Activated B cell treated with CpG ODN at 0.5 μM for 24 hours (primary cell): ENCODE measurements at regions of chr2 and their contacts with region 1.

Region 1: DNA sequence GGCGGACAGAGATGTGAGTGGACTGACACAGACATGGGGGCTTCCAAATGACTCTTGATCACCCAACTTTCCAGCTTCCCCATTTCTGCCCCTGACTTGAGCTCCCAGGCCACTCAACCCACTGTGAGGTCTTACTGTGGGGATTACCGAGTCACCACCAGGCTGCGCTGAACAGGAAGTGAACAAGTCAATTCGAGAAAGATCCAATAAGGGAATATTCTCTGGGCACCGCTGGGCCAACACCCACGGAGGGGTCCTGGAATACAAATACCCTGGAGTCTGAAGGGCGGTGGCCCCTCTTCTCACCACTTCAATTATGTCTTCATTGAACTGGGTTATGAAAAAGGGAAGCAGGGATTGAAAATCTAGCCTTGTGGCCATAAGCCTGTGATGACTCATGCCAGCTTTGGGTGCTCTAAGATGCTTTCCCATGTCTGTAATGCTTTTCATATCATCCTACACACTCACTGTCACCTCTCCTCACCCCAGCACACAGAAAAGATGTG is 37.7 kb downstream of the BCL11A start:
- DNase-seq: peak; percentile 57
- ATAC-seq: peak; percentile 76
- H3K4me3 Mint-ChIP-seq: peak overlapping the region; percentile 68
- H3K27ac Mint-ChIP-seq: peak overlapping the region; percentile 91
- H3K4me1 Mint-ChIP-seq: peaks cover 97% of the 10 kb centered on the region
- H3K27me3 Mint-ChIP-seq: no peaks in the 10 kb centered on the region
- CTCF ChIP-seq: no peak

Region 2: GRCh38 chr2:60498816-60499429 is 16.9 kb before region 1 on chr2:
- CTCF ChIA-PET with region 1: interaction called, 4 read pairs
- POLR2A ChIA-PET with region 1: interaction called, 22 read pairs
- intact Hi-C with region 1: loop called (anchors 2 kb)
- DNase-seq: peak; percentile 40
- ATAC-seq: peak; percentile 64
- H3K4me3 Mint-ChIP-seq: peak overlapping the region; percentile 64
- H3K27ac Mint-ChIP-seq: peak overlapping the region; percentile 84
- H3K4me1 Mint-ChIP-seq: peaks cover 99% of the 10 kb centered on the region
- H3K27me3 Mint-ChIP-seq: no peaks in the 10 kb centered on the region
- CTCF ChIP-seq: no peak

Region 3: DNA sequence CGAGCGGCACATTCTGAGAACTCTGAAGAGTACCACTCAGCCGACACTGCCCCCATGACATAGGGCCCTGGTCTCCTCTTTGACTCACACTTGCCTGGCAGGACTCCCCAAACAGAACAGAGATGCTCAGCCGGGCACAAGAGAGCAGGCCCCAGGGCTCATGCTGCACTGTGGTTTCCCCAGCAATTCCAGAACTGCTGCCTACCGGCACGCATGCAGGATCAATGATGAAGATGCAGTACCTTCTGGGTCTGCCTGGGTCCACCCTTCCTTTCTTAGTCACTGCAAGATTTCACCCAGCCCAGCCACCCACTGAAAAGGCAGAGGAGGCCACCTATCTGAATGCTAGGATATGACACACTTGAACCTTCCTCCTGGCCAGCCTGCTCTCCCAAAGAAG is 11.7 kb before region 1 on chr2:
- CTCF ChIA-PET with region 1: interaction called, 4 read pairs
- POLR2A ChIA-PET with region 1: interaction called, 22 read pairs
- intact Hi-C with region 1: loop called (anchors 1 kb)
- DNase-seq: no peak
- ATAC-seq: peak; percentile 43
- H3K4me3 Mint-ChIP-seq: peak overlapping the region; percentile 58
- H3K27ac Mint-ChIP-seq: peak overlapping the region; percentile 90
- H3K4me1 Mint-ChIP-seq: peaks cover 98% of the 10 kb centered on the region
- H3K27me3 Mint-ChIP-seq: no peaks in the 10 kb centered on the region
- CTCF ChIP-seq: no peak

Region 4: DNA sequence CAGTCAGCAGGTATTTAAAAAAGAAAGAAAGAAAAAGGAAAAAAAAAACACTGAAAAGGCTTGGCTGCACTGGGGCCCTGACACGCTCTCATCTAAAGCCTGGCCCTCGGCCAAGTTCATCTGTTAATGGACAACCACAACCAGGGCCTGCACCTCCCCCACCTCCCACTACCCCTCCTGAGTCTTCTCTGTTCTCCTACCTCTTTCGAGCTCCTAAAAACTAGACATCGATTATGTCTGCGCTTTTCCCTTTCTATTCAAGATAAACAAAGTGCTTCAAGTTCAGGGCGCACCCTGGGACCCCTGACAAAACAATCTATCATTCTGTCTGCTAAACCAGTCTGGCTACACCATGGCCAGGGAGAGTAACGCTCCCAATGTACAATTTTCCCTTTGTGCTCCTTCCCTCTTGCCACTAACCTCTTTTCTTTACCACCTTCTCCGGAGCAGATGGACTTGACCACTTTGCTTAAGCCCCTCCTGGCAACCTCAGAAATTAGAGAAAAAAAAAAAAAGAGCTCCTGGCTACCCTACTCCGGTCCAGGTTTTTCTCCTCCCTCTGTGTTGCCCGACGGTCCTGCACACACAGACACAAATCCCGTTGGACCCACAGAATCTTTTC is 15.0 kb after region 1 on chr2:
- CTCF ChIA-PET with region 1: interaction called, 3 read pairs
- POLR2A ChIA-PET with region 1: interaction called, 18 read pairs
- intact Hi-C with region 1: loop called (anchors 2 kb)
- DNase-seq: no peak
- ATAC-seq: peak; percentile 49
- H3K4me3 Mint-ChIP-seq: peak overlapping the region; percentile 81
- H3K27ac Mint-ChIP-seq: peak overlapping the region; percentile 84
- H3K4me1 Mint-ChIP-seq: peaks cover 100% of the 10 kb centered on the region
- H3K27me3 Mint-ChIP-seq: no peaks in the 10 kb centered on the region
- CTCF ChIP-seq: no peak

Region 5: GRCh38 chr2:60544062-60544461 is 28.3 kb after region 1 on chr2:
- CTCF ChIA-PET with region 1: interaction called, 5 read pairs
- POLR2A ChIA-PET with region 1: interaction called, 30 read pairs
- intact Hi-C with region 1: loop called (anchors 1 kb)
- DNase-seq: no peak
- ATAC-seq: peak; percentile 40
- H3K4me3 Mint-ChIP-seq: peak overlapping the region; percentile 96
- H3K27ac Mint-ChIP-seq: peak overlapping the region; percentile 98
- H3K4me1 Mint-ChIP-seq: peaks cover 89% of the 10 kb centered on the region
- H3K27me3 Mint-ChIP-seq: no peaks in the 10 kb centered on the region
- CTCF ChIP-seq: no peak